ENCODE measurements at regions of chr7 and their contacts with region 1.

Region 1: GRCh38 chr7:48126037-48126436 is 37.0 kb downstream of the UPP1 start:
- DNase-seq: no peak
- H3K4me3 ChIP-seq: no peak overlapping the region
- CTCF ChIP-seq: no peak

Region 2: GRCh38 chr7:48052748-48053147 is 73.3 kb before region 1 on chr7:
- in situ Hi-C with region 1: no loop called
- DNase-seq: no peak
- H3K4me3 ChIP-seq: no peak overlapping the region
- CTCF ChIP-seq: no peak

Region 3: DNA sequence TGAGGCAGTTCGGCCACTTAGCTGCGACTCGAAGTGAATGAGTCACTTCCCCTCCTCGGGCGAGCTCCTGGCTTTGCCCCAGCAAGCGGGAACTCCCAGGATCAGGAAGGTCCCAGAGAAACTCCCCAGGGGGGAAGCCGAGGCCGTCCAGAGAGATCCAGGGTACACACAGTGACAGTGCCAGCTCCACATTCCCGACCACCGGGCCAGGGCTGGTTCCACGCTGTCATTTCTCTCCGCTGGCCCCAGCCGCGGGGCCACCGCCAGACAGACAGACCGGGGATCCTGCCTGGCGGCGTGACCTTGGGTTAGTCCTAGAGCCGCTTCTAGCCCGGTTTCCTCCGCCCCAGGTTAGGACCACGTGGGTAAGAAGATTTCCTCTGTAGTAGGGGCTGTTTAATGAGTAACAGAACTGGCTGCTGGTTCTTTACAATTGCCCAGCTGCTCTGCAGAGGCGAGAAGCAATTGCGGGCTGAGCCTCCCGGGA is 37.4 kb before region 1 on chr7:
- in situ Hi-C with region 1: no loop called
- DNase-seq: peak; percentile 76
- H3K4me3 ChIP-seq: peak overlapping the region; percentile 73
- CTCF ChIP-seq: no peak

Region 4: GRCh38 chr7:48161407-48162125 is 35.5 kb after region 1 on chr7:
- in situ Hi-C with region 1: loop called (anchors 5 kb)
- DNase-seq: no peak
- H3K4me3 ChIP-seq: no peak overlapping the region
- CTCF ChIP-seq: no peak

Region 5: GRCh38 chr7:48188776-48189520 is 62.9 kb after region 1 on chr7:
- in situ Hi-C with region 1: no loop called
- DNase-seq: peak; percentile 63
- H3K4me3 ChIP-seq: no peak overlapping the region
- CTCF ChIP-seq: peak; percentile 9

Measured in astrocyte of the cerebellum (primary cell).